ENCODE measurements at regions of chr13 and their contacts with region 1.

Region 1: GRCh38 chr13:102773441-102774215 is at the start of gene TEX30:
- DNase-seq: peak; percentile 67 to 97 (median 76)

Region 2: DNA sequence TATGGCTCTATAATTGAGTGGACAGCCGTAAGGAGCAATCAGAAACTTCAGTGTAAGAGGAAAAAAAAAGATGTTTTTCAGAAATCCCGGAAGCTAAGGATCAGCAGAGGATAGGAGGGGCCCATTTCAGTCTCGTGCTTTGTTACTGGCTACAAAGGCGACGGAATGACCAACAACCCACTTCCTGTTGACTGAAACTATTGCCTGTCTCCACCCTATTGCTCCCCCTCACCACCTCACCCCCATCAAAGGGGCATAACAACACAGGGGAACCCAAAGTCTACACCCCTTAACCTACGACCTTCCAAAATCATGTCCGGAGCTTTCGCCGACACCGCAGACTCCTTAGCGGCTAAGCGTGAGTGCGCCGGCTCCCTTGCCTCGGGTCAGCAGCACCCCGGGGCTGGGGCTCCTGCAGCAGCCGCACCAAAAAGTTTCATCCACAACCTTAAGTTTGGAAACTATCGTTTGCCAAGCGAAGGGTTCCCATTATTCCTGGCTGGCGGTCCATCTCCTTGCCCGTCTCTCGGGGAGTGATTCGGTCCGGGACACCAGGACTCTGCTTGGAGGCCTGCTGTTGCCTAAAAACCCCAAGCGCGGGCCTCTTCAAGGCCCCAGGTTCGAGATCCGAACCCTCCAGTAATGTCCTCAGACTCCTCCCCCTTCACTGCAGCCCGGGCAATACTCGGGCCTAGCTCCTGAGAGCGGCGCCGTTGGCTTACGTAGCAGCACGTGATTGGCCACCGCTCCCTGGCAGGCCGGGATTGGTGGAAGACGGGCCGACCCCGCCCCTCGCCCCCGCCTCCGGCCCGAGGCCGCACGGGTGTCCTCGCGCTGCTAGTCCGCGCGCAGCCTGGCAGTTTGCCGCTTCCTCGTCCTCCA is 177.2 kb before region 1 on chr13 and contains the start of gene TPP2:
- intact Hi-C with region 1: loop called (anchors 2 kb)
- DNase-seq: peak; percentile 97 to 100 (median 99)

Region 3: DNA sequence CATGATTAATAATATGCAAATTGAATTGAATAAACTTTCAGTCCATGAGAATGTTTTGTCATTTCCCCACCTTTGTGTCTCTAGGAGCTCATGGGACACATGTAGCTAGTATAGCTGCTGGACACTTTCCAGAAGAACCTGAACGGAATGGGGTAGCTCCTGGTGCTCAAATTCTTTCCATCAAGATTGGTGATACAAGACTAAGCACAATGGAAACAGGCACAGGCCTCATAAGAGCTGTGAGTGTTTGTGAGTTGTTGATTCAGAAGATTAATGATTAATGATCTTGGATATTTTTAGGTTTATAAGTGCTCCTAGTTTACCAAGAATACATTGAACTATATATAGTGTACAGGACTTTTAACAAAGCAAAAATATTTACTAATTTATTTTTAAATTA is 146.7 kb before region 1 on chr13:
- intact Hi-C with region 1: no loop called
- DNase-seq: no peak

Region 4: DNA sequence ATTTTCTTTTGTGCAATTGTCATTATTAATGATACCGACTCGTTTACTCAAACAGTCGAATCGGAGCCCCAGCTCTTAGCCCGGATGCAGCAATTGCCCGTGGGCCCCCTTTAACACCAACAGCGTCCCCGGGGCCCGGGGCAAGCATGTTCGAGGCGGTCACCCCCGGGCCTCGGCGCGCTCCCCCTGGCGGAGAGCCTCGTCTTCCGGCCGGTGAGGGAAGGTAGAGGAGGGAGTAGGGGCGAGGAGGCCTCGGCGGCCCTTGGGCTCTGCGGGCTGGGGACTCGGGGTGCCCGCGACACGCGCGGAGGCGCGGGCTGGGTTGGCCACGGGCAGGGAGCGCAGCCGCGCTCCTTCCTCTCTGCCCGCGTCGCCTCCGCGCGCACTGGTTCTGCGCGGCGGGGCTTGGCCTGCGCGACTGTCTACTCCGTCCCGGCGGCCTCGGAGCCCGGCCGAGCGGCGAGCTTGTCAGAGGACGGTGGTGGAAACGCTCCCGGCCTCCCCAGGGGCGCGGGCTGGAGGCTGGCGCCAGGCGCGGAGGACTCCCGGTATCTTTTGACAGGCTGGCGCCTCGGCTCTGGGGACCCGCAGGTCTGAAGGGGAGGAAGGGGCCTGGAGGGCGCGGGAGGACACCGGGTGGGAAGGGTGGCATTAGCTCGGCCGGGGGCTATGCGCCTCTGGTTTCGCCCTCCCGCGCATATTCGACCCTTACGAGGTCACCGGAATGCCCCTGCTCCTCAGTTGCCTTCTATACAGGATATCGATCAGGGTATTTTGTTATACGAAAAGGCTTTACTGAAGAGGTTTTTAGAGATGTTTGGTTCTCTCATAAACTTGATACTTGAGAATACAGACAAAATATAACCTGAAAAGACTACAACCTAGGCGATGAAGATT is 26.8 kb after region 1 on chr13:
- intact Hi-C with region 1: loop called (anchors 1 kb)
- DNase-seq: peak; percentile 67 to 95 (median 77)